Ascending aorta (tissue), 2 donors: ENCODE measurements at regions of chr3 and their contacts with region 1.

Region 1: GRCh38 chr3:99240700-99241099 is 339.2 kb upstream of the DCBLD2 start:
- DNase-seq: no peak
- H3K4me3 ChIP-seq: no peak overlapping the region
- H3K27ac ChIP-seq: peak overlapping the region; percentile 78 to 87
- H3K4me1 ChIP-seq: peaks cover 10 to 27% of the 10 kb centered on the region in 2 donors
- H3K27me3 ChIP-seq: no peaks in the 10 kb centered on the region
- CTCF ChIP-seq: no peak

Region 2: GRCh38 chr3:99128725-99129505 is 111.8 kb before region 1 on chr3:
- intact Hi-C with region 1: loop called (anchors 2 kb)
- DNase-seq: peak in 1 of 2 donors; percentile 81
- H3K4me3 ChIP-seq: no peak overlapping the region
- H3K27ac ChIP-seq: peak overlapping the region; percentile 83 to 88
- H3K4me1 ChIP-seq: peaks cover 9 to 35% of the 10 kb centered on the region in 2 donors
- H3K27me3 ChIP-seq: no peaks in the 10 kb centered on the region
- CTCF ChIP-seq: no peak